OCI-LY7 (cell line): ENCODE measurements at regions of chr13 and their contacts with region 1.

Region 1: GRCh38 chr13:31199849-31200636 is at the start of gene B3GLCT:
- DNase-seq: peak; percentile 88
- H3K4me3 ChIP-seq: peak within 1 kb of the TSS; percentile 89
- H3K27ac ChIP-seq: peak within 1 kb of the TSS; percentile 74
- H3K4me1 ChIP-seq: peaks cover 16% of the 10 kb centered on the region
- CTCF ChIP-seq: peak; percentile 78
- total RNA-seq, gene B3GLCT: 3.6 and 3.7 TPM in 2 replicates

Region 2: GRCh38 chr13:31073859-31074718 is 126.0 kb before region 1 on chr13:
- CTCF ChIA-PET with region 1: no interaction called
- POLR2A ChIA-PET with region 1: no interaction called
- intact Hi-C with region 1: loop called (anchors 1 kb)
- DNase-seq: peak; percentile 96
- H3K4me3 ChIP-seq: peak overlapping the region; percentile 50
- H3K27ac ChIP-seq: peak overlapping the region; percentile 96
- H3K4me1 ChIP-seq: peaks cover 44% of the 10 kb centered on the region
- CTCF ChIP-seq: no peak

Region 3: GRCh38 chr13:31150315-31150985 is 49.6 kb before region 1 on chr13:
- CTCF ChIA-PET with region 1: no interaction called
- POLR2A ChIA-PET with region 1: no interaction called
- intact Hi-C with region 1: no loop called
- DNase-seq: no peak
- H3K4me3 ChIP-seq: no peak overlapping the region
- H3K27ac ChIP-seq: no peak overlapping the region
- H3K4me1 ChIP-seq: no peaks in the 10 kb centered on the region
- CTCF ChIP-seq: no peak

Region 4: DNA sequence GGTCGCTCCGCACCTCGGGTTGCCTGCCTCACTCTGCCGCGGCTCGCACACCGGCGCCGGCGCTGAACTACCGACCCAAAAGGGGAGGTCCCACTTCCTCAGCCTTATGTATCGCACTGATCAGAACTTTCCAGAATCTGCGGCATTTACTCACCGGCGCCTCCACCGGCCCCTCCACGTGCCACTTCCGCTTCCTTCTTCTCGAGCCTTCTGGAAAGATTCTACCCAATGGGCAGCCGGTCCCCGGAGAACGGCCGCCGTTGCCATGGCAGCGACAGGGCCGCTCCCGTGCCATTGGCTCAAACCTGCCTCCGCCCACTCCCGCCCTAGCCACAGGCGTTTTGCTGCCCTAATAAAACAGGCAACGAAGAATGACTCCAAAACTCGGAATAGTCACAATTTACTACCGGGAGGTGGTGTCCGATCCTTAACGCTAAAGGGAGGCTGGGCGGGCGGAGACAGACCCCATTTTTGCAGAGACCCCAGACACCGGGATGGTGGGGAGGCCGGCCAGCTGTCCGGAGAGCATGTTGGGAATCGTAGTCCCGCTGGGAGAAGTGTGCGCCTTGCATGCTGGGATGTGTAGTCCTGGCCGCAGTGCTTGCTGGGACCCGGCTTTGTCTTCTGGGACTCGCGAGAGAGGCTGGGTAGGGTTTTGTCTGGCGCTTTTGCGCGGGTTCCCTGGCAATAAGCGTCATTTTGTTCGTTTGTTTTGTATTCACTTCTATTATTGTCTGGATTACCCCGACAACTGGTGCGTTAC is 38.0 kb before region 1 on chr13 and contains the start of gene HSPH1:
- CTCF ChIA-PET with region 1: no interaction called
- POLR2A ChIA-PET with region 1: interaction called, 3 read pairs
- intact Hi-C with region 1: loop called (anchors 1 kb)
- DNase-seq: peak; percentile 99
- H3K4me3 ChIP-seq: peak within 1 kb of the TSS; percentile 91
- H3K27ac ChIP-seq: peak within 1 kb of the TSS; percentile 58
- H3K4me1 ChIP-seq: peaks cover 27% of the 10 kb centered on the region
- CTCF ChIP-seq: peak; percentile 45
- total RNA-seq, gene HSPH1: 89.6 and 110 TPM in 2 replicates

Region 5: DNA sequence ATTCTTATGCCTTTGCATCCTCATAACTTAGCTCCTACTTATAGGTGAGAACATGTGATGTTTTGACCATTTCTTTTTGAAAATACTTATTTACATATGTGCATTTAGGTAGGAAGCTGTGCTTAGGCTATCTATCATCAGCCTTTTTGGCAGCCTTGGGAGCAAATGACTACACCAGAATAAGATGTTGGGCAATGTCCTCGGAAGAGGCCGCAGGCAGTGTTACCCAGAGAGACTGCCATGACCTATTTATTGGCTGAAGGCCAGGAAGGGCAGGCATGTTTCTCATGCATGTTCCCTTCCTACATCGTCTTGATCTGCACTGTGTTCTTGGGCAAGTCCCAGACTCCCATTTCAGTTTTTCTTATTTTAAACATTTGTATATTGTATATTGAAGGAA is 122.0 kb after region 1 on chr13:
- CTCF ChIA-PET with region 1: no interaction called
- POLR2A ChIA-PET with region 1: no interaction called
- intact Hi-C with region 1: loop called (anchors 1 kb)
- DNase-seq: peak; percentile 41
- H3K4me3 ChIP-seq: peak overlapping the region; percentile 55
- H3K27ac ChIP-seq: peak overlapping the region; percentile 98
- H3K4me1 ChIP-seq: peaks cover 78% of the 10 kb centered on the region
- CTCF ChIP-seq: no peak

Region 6: GRCh38 chr13:31424117-31424729 is 224.2 kb after region 1 on chr13:
- CTCF ChIA-PET with region 1: no interaction called
- POLR2A ChIA-PET with region 1: no interaction called
- intact Hi-C with region 1: loop called (anchors 1 kb)
- DNase-seq: peak; percentile 88
- H3K4me3 ChIP-seq: no peak overlapping the region
- H3K27ac ChIP-seq: no peak overlapping the region
- H3K4me1 ChIP-seq: peaks cover 9% of the 10 kb centered on the region
- CTCF ChIP-seq: peak; percentile 97

Region 7: GRCh38 chr13:31742097-31742734 is 542.2 kb after region 1 on chr13:
- CTCF ChIA-PET with region 1: no interaction called
- POLR2A ChIA-PET with region 1: no interaction called
- intact Hi-C with region 1: loop called (anchors 5 kb)
- DNase-seq: peak; percentile 64
- H3K4me3 ChIP-seq: no peak overlapping the region
- H3K27ac ChIP-seq: no peak overlapping the region
- H3K4me1 ChIP-seq: no peaks in the 10 kb centered on the region
- CTCF ChIP-seq: peak; percentile 98